ENCODE measurements at regions of chr14 and their contacts with region 1.

Region 1: DNA sequence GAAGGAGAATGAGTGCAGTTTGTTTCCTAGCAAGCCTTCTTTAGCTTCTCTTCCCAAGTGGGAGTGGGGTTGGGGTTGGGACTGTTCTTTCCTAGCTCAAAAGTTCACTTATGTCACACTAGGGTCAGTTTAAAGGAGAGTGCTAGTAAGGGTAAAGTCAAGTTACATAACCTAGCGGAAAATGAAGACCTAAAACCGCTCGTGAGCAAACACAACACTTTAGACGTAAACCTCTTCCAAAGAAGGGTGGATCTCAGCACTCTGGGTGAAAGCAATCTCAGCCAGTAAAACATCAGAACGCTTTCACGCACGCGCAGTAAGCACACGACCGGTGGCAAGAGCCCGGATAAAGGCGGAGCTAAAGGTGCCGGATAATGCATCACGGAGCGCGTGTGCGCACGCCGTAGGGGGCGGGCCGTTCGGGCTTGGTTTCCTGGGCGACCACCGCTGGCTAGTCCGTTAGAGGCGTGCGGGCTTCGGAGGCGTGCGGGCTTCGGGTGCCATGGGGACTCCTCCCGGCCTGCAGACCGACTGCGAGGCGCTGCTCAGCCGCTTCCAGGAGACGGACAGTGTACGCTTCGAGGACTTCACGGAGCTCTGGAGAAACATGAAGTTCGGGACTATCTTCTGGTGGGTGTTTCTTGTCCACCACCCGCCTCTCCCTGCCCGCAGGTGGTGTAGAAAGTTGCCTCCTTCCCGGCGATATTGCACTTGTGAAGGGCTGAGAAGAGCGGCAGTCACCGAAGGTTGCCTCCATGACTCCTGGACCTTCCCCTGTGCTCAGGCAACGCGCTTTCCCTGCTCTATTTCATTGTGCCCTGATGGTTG is at the start of gene SNAPC1:
- DNase-seq: peak; percentile 97
- ATAC-seq: peak; percentile 98 to 100 (median 99)
- H3K4me3 ChIP-seq: peak within 1 kb of the TSS; percentile 21 to 95 (median 84)
- H3K27ac ChIP-seq: peak within 1 kb of the TSS; percentile 44 to 98 (median 90)
- H3K4me1 ChIP-seq: peaks cover 0 to 46% (median 29%) of the 10 kb centered on the region in 9 donors
- H3K27me3 ChIP-seq: no peaks in the 10 kb centered on the region
- CTCF ChIP-seq: no peak
- total RNA-seq, gene SNAPC1: 5.6 to 11.9 (median 7.4) TPM

Region 2: DNA sequence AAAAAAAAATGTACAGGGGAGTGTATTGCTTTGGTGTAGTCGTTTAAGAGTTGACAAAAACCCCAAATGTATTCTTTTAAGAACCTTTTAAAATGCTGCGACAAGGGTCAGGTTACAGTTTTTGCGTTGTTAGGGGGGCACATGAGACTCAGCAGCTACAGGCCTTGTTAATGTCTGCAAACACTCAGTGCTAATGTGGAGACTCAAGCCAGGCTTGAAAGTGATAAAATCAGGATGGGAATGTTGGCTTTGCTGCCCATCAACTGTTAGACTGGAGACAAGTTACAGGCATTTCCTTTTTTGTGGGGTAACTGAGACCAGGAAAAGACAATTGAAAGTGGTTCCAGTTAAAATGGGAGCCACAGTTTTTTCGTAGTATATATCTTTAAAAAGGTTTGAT is 356.0 kb before region 1 on chr14:
- intact Hi-C with region 1: no loop called
- DNase-seq: no peak
- ATAC-seq: no peak
- H3K4me3 ChIP-seq: no peak overlapping the region
- H3K27ac ChIP-seq: no peak overlapping the region
- H3K4me1 ChIP-seq: peaks cover 3 to 69% (median 25%) of the 10 kb centered on the region in 9 donors
- H3K27me3 ChIP-seq: no peaks in the 10 kb centered on the region
- CTCF ChIP-seq: no peak

Region 3: GRCh38 chr14:61461808-61462275 is 300.3 kb before region 1 on chr14:
- intact Hi-C with region 1: loop called in 3 of 10 experiments (anchors 10 kb)
- DNase-seq: peak in 1 of 2 donors; percentile 65
- ATAC-seq: peak; percentile 12 to 67 (median 54)
- H3K4me3 ChIP-seq: no peak overlapping the region
- H3K27ac ChIP-seq: peak overlapping the region in 7 of 10 donors; percentile 38 to 74 (median 53)
- H3K4me1 ChIP-seq: peaks cover 0 to 43% (median 35%) of the 10 kb centered on the region in 9 donors
- H3K27me3 ChIP-seq: no peaks in the 10 kb centered on the region
- CTCF ChIP-seq: peak; percentile 72 to 85 (median 82)

Region 4: DNA sequence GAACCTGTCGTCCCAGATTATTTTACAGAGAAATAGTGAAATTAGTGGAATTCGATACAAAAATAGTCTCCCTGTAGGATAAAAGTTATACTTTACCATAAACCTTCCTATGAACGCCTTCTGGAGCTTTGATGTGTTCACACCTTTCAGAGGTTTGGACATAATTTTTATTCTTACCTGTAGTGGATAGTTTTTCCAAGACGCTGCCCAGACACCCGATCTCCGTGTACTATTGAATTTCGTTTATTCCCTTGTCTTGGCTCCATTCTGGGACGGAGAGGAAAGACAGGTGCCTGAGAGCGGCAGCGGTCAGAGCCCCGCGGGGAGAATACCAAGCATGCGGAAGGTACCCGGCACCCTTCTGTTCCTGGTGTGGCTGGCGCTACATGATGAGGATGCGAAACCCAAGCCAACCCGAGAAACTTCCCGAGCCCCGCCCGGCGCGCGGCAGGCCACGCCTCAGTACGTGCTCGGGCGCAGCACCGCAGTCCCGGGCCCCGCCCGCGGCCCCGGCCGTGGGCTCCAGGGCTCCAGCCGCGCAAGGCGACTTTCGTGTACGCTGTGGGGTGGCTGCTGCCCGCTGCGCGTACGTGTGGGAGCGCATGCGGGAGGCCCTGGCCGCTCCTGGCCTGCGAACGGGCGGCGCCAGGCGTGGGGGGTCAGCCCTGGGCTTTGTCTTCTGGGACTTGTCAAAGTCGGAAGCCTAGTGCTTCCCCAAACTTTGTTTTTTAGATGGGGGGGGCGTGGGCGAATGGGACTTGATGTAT is 11.3 kb before region 1 on chr14:
- intact Hi-C with region 1: loop called in 1 of 10 experiments (anchors 1 kb)
- DNase-seq: peak; percentile 88 to 90
- ATAC-seq: peak; percentile 96 to 98 (median 98)
- H3K4me3 ChIP-seq: peak overlapping the region; percentile 3 to 82 (median 65)
- H3K27ac ChIP-seq: peak overlapping the region; percentile 87 to 97 (median 93)
- H3K4me1 ChIP-seq: peaks cover 0 to 63% (median 36%) of the 10 kb centered on the region in 9 donors
- H3K27me3 ChIP-seq: no peaks in the 10 kb centered on the region
- CTCF ChIP-seq: no peak

Region 5: DNA sequence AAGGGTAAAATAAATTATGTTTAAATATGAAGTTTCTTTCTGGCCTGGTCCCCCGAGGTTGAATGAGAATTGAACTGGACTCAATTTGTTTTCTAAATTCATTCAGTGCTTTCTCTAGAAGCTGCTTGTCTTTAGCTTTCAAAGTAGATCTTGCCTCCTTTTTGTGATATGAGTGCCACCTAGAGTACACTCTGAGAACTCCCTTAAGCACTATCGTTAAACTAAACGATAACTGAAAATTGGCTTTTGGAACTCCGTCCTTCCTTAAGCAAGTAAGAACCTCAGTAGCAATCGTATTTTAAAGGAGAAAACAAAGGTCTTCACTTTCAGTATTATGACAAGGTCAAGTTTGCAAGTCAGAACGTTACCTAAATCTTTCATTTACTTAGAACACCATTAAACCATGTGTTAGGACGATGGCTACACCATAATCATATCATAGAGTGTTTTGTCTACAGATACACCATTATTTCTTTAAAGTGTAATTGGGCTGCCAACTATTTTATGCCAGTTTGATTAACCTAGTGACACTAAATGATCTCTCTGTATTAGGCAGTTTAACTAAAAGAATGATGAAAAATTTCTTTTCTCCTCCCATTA is 364.8 kb after region 1 on chr14:
- intact Hi-C with region 1: no loop called
- DNase-seq: peak in 1 of 2 donors; percentile 5
- ATAC-seq: peak in 1 of 8 donors; percentile 69
- H3K4me3 ChIP-seq: no peak overlapping the region
- H3K27ac ChIP-seq: no peak overlapping the region
- H3K4me1 ChIP-seq: no peaks in the 10 kb centered on the region
- H3K27me3 ChIP-seq: peaks cover 0 to 71% (median 50%) of the 10 kb centered on the region in 7 donors
- CTCF ChIP-seq: peak; percentile 31 to 80 (median 72)